Psoas muscle (tissue), 8 donors: ENCODE measurements at regions of chr2 and their contacts with region 1.

Region 1: DNA sequence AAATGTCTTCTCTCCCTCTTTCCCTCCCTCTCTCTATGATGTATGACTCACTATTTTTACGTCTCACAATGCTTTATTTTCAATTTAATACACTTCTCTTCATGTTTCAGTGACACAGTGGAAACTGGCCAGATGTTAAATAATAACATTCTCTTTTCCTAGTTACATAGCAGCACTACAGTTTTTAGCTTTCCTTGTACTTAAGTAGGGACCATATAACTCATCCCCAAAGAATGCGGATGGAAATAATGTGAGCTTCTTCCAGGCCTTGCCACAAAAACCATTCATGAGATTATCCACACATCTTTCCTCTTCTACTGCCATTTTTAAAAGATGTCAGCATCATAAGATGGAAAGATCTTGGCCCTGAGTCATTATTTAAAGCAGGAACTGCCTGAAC is 789.4 kb downstream of the LRP1B start:
- DNase-seq: no peak
- ATAC-seq: no peak
- H3K4me3 ChIP-seq: no peak overlapping the region
- H3K27ac ChIP-seq: no peak overlapping the region
- H3K4me1 ChIP-seq: no peaks in the 10 kb centered on the region
- H3K27me3 ChIP-seq: no peaks in the 10 kb centered on the region
- CTCF ChIP-seq: no peak

Region 2: DNA sequence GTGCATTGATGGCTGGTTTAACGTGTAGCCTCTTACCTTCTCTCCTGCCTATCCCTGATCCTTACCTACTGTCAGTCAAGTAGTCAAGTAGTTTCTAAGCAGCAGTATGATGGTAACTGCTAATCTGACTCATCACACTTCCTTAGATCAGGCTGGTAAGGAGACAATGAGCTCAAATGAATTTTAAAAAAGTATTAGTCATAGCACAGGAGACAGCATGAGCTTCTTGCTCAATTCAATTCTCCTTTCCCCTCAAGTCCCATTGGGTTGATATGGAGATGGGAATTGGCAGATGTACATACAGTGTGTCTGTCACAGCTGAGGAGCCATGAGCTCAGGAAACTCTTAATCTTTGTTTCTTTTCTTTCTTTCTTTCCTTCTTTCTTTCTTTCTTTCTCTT is 10.3 kb before region 1 on chr2:
- intact Hi-C with region 1: loop called in 1 of 2 experiments (anchors 1 kb)
- DNase-seq: no peak
- ATAC-seq: peak in 3 of 4 donors; percentile 26 to 37 (median 28)
- H3K4me3 ChIP-seq: no peak overlapping the region
- H3K27ac ChIP-seq: no peak overlapping the region
- H3K4me1 ChIP-seq: no peaks in the 10 kb centered on the region
- H3K27me3 ChIP-seq: no peaks in the 10 kb centered on the region
- CTCF ChIP-seq: no peak